PC-3 (cell line): ENCODE measurements at regions of chr20 and their contacts with region 1.

Region 1: GRCh38 chr20:34768096-34768495 is 57.4 kb downstream of the NCOA6 start:
- DNase-seq: peak; percentile 11
- ATAC-seq: peak; percentile 33; the same call in 1 of the 2 replicates
- H3K4me3 ChIP-seq: no peak overlapping the region
- H3K27ac ChIP-seq: no peak overlapping the region
- H3K4me1 ChIP-seq: 0 out of 2 replicates have a peak, but pooled peaks cover 5% of the 10 kb centered on the region
- H3K27me3 ChIP-seq: no peaks in the 10 kb centered on the region
- CTCF ChIP-seq: no peak

Region 2: GRCh38 chr20:34704177-34705007 is 63.7 kb before region 1 on chr20 and contains the start of gene TP53INP2:
- CTCF ChIA-PET with region 1: interaction called, 10 read pairs
- POLR2A ChIA-PET with region 1: no interaction called
- intact Hi-C with region 1: no loop called
- DNase-seq: peak; percentile 63
- ATAC-seq: peak; percentile 30
- H3K4me3 ChIP-seq: peak within 1 kb of the TSS; percentile 85
- H3K27ac ChIP-seq: no peak within 1 kb of the TSS
- H3K4me1 ChIP-seq: peaks cover 20% of the 10 kb centered on the region
- H3K27me3 ChIP-seq: no peaks in the 10 kb centered on the region
- CTCF ChIP-seq: no peak
- total RNA-seq, gene TP53INP2: 2.1 and 3.3 TPM in 2 replicates